ENCODE measurements at regions of chr3 and their contacts with region 1.

Region 1: GRCh38 chr3:155854141-155854940 is at the start of gene SLC33A1:
- DNase-seq: peak; percentile 98 to 99
- H3K4me3 ChIP-seq: peak within 1 kb of the TSS; percentile 95
- H3K4me3 Mint-ChIP-seq: peak within 1 kb of the TSS; percentile 90
- H3K27ac Mint-ChIP-seq: peak within 1 kb of the TSS; percentile 95
- H3K4me1 ChIP-seq: peaks cover 11% of the 10 kb centered on the region; the same call in 1 of the 2 replicates
- H3K4me1 Mint-ChIP-seq: no peaks in the 10 kb centered on the region
- H3K27me3 ChIP-seq: no peaks in the 10 kb centered on the region
- H3K27me3 Mint-ChIP-seq: no peaks in the 10 kb centered on the region
- CTCF ChIP-seq: no peak
- total RNA-seq, gene SLC33A1: 19.6 TPM in 2 replicates

Region 2: DNA sequence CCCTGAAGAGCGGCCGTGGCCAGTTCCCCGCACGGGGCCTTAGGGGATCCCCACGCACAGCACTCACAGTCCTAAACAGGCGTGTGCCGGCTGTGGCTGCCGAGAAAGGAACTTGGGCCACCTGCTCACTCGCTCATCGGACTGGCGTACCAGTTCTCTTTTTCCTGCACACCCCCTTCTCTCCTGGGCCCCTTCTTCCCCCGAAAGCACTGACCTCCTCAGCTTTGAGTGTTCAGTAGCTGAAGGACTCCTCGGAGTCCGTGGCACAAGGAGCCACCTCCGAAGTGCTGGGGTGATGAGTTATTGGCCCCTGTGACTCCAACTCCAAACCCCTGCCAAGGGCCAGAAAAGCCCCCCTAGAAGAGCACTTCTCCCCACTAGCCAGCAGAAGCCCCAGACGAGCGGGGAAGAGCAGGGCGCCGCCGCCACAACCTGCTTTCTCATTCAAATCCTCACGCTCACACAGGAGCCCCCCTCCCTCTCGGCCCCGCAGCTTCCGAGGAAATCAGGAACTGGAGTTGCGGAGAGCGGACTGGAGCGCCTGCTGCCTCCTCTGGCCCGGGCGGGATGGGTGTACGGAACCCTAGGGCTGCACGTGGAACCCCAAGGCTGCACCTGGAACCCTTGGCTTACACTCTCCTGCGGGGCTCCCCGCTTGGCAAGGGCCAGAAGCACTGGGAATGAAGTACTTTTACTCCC is 109.6 kb before region 1 on chr3 and contains the start of gene PLCH1:
- CTCF ChIA-PET with region 1: no interaction called
- POLR2A ChIA-PET with region 1: no interaction called
- intact Hi-C with region 1: loop called (anchors 2 kb)
- DNase-seq: peak; percentile 82 to 83
- H3K4me3 ChIP-seq: peak within 1 kb of the TSS; percentile 94
- H3K4me3 Mint-ChIP-seq: peak within 1 kb of the TSS; percentile 99
- H3K27ac Mint-ChIP-seq: peak within 1 kb of the TSS; percentile 93
- H3K4me1 ChIP-seq: peaks cover 29% of the 10 kb centered on the region
- H3K4me1 Mint-ChIP-seq: peaks cover 41% of the 10 kb centered on the region
- H3K27me3 ChIP-seq: no peaks in the 10 kb centered on the region
- H3K27me3 Mint-ChIP-seq: no peaks in the 10 kb centered on the region
- CTCF ChIP-seq: no peak
- total RNA-seq, gene PLCH1: 2.8 and 3.1 TPM in 2 replicates

Region 3: DNA sequence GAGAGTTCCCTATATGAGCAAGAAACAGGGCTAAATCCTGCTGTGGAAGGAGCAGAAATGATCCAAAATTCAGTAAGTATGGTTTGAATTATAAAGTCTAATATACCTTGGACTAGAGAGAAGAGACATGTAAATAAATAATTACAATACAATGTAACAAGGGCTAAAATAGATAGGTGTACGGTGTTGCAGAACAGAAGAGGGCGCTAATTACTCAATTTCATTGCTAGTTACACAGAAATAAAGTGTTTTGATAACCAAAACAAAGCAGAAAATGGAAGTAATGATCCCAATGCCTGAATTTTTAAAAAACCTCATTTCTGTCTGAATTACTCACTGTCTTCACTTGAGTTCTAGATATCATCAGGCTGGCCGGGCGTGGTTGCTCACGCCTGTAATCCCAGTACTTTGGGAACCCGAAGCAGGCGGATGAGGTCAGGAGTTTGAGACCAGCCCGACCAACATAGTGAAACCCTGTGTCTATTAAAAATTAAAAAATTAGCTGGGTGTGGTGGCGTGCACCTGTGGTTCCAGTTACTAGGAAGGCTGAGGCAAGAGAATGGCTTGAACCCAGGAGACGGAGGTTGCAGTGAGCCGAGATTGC is 101.2 kb before region 1 on chr3:
- CTCF ChIA-PET with region 1: no interaction called
- POLR2A ChIA-PET with region 1: no interaction called
- intact Hi-C with region 1: loop called (anchors 2 kb)
- DNase-seq: peak in 1 of 2 experiments; percentile 24
- H3K4me3 ChIP-seq: no peak overlapping the region
- H3K4me3 Mint-ChIP-seq: no peak overlapping the region
- H3K27ac Mint-ChIP-seq: no peak overlapping the region
- H3K4me1 ChIP-seq: peaks cover 11% of the 10 kb centered on the region
- H3K4me1 Mint-ChIP-seq: peaks cover 14% of the 10 kb centered on the region
- H3K27me3 ChIP-seq: no peaks in the 10 kb centered on the region
- H3K27me3 Mint-ChIP-seq: no peaks in the 10 kb centered on the region
- CTCF ChIP-seq: peak; percentile 24 to 35

Region 4: DNA sequence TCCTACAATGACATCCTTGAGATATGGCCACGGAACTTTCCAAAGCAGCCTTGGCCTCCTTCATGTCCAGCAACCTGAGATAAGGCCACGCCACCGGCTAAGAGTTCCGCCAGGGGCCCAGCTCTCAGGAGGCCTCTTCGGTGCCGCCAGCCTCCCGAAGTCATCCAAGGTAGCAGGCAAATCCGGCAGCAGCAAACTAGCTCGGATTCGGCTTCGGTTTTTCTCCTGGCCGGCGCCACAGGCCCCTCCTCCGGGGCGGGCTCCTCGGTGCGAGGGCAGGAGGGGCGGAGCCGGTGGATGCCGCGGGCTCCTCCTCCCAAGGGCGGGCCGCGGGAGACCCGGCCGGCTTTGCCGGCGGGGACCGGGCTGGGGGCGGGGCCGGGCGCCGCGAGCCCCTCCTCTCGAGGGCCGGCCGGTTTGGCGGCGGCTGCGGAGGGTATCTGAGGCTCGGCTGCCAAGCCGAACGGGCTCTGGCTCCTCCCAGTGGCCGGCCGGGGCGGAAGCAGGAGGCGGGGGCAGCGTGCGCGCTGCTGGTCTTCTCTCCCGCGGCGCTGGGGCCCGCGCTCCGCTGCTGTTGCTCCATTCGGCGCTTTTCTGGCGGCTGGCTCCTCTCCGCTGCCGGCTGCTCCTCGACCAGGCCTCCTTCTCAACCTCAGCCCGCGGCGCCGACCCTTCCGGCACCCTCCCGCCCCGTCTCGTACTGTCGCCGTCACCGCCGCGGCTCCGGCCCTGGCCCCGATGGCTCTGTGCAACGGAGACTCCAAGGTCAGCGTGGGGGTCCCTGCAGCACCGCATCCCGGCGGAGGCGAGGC is 16.0 kb after region 1 on chr3 and contains the start of gene GMPS:
- CTCF ChIA-PET with region 1: interaction called, 6 read pairs
- POLR2A ChIA-PET with region 1: interaction called, 11 read pairs
- intact Hi-C with region 1: loop called (anchors 1 kb)
- DNase-seq: peak; percentile 94 to 98
- H3K4me3 ChIP-seq: peak within 1 kb of the TSS; percentile 100
- H3K4me3 Mint-ChIP-seq: peak within 1 kb of the TSS; percentile 97
- H3K27ac Mint-ChIP-seq: peak within 1 kb of the TSS; percentile 95
- H3K4me1 ChIP-seq: peaks cover 12% of the 10 kb centered on the region
- H3K4me1 Mint-ChIP-seq: no peaks in the 10 kb centered on the region
- H3K27me3 ChIP-seq: no peaks in the 10 kb centered on the region
- H3K27me3 Mint-ChIP-seq: no peaks in the 10 kb centered on the region
- CTCF ChIP-seq: peak in 1 of 2 experiments; percentile 54
- total RNA-seq, gene GMPS: 90.7 and 102 TPM in 2 replicates